IMR-90 (cell line): ENCODE measurements at regions of chr9 and their contacts with region 1.

Region 1: DNA sequence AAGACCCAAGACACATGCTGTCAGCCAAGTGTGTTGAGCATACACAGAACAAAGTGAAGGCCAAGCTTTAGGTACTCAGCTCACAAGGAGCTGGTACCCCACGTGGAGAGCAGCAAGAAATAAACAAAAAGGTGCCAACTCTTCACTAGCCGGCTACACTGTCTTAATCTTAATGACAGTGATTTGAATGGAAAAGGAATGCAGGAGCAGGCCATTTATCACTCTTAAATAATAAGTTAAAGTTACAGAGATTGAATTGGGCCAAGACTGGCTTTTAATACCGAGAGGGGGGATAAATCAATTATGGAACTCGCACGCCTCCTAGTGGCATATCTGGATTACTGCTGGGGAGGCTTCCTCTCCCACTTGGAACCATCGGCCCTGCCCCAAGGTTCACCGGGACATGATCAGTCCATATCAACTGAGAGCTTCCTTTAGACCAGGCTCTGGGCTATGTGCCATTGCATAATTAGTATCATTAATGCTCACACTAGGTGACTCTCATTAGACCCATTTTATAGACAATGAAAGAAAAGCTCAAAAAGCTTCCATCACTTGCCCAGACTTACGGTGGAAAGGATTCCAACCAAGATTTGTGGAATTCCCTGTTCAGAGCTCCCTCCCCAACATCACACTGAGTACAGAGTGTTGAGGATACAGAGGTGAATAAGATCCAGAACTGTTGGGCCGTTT is 94.0 kb downstream of the ACTL7B start:
- DNase-seq: peak; percentile 51
- ATAC-seq: peak; percentile 98
- H3K4me3 ChIP-seq: no peak overlapping the region
- H3K27ac ChIP-seq: no peak overlapping the region
- H3K4me1 ChIP-seq: no peaks in the 10 kb centered on the region
- H3K27me3 ChIP-seq: peaks cover 11% of the 10 kb centered on the region; the same call in 1 of the 2 replicates
- CTCF ChIP-seq: peak; percentile 89
- POLR2A ChIP-seq: no peak
- RAD21 ChIP-seq: peak; percentile 86

Region 2: DNA sequence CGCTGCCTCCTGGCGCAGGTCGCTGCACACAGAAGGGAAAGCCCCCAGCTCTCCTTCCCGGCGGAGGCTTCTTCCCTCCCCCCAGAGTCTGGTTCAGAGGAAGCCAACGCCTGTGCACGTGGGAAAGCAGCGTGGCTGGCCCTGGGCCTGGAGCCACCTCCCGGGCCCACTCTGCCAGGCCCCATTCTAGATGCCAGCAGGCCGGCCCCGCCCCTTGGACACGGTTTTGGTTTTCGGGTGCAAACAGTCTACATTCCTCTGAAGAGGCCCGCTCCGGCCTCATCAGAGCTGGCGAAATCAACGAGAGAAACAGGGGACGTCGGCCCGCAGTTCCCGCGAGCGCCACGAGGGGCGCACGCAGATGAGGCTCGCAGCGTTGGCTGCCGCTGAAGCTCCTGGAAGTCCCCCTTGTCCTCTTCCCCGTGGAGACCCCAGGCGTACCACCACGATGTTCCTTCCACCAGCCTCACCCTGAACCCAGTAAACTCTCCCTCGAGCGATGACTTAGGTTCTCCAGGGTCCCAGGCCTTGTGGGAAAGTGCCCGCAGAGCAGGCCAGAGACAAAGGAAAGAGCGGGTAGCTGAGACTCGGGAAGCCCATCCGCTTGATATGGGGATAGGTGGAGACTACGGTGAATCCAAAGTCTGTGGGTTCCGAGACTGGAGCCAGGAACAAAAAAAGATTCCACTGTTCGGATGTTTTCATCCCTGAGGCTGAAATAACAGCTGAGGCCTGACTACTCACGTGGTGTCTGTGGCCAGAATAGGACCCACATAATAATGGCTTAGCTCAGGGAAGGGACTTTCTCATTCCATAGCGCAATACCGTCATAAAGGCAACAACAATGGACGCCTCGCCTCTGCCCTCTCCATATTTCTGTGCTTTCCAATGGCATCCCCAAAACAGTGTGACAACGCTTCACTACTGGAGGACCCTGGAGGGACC is 1336.4 kb before region 1 on chr9:
- CTCF ChIA-PET with region 1: interaction called, 4 read pairs
- POLR2A ChIA-PET with region 1: no interaction called
- dilution Hi-C with region 1: no loop called
- in situ Hi-C with region 1: no loop called
- intact Hi-C with region 1: loop called (anchors 1 kb)
- DNase-seq: peak; percentile 19
- ATAC-seq: peak; percentile 87
- H3K4me3 ChIP-seq: no peak overlapping the region
- H3K27ac ChIP-seq: no peak overlapping the region
- H3K4me1 ChIP-seq: no peaks in the 10 kb centered on the region
- H3K27me3 ChIP-seq: peaks cover 1% of the 10 kb centered on the region; the same call in 1 of the 2 replicates
- CTCF ChIP-seq: peak; percentile 60
- POLR2A ChIP-seq: no peak
- RAD21 ChIP-seq: peak; percentile 40

Region 3: GRCh38 chr9:107478805-107479204 is 1283.0 kb before region 1 on chr9:
- CTCF ChIA-PET with region 1: no interaction called
- POLR2A ChIA-PET with region 1: no interaction called
- dilution Hi-C with region 1: no loop called
- in situ Hi-C with region 1: no loop called
- intact Hi-C with region 1: loop called (anchors 1 kb)
- DNase-seq: no peak
- ATAC-seq: no peak
- H3K4me3 ChIP-seq: no peak overlapping the region
- H3K27ac ChIP-seq: no peak overlapping the region
- H3K4me1 ChIP-seq: peaks cover 2% of the 10 kb centered on the region
- H3K27me3 ChIP-seq: no peaks in the 10 kb centered on the region
- CTCF ChIP-seq: no peak
- POLR2A ChIP-seq: no peak
- RAD21 ChIP-seq: no peak

Region 4: GRCh38 chr9:107732781-107733522 is 1028.8 kb before region 1 on chr9:
- CTCF ChIA-PET with region 1: no interaction called
- POLR2A ChIA-PET with region 1: no interaction called
- dilution Hi-C with region 1: no loop called
- in situ Hi-C with region 1: no loop called
- intact Hi-C with region 1: loop called (anchors 10 kb)
- DNase-seq: peak; percentile 73
- ATAC-seq: peak; percentile 38
- H3K4me3 ChIP-seq: peak overlapping the region; percentile 23; the same call in 1 of the 2 replicates
- H3K27ac ChIP-seq: peak overlapping the region; percentile 98
- H3K4me1 ChIP-seq: peaks cover 24% of the 10 kb centered on the region
- H3K27me3 ChIP-seq: no peaks in the 10 kb centered on the region
- CTCF ChIP-seq: no peak
- POLR2A ChIP-seq: no peak
- RAD21 ChIP-seq: no peak

Region 5: GRCh38 chr9:108282872-108283271 is 478.9 kb before region 1 on chr9:
- CTCF ChIA-PET with region 1: no interaction called
- POLR2A ChIA-PET with region 1: no interaction called
- dilution Hi-C with region 1: no loop called
- in situ Hi-C with region 1: no loop called
- intact Hi-C with region 1: loop called (anchors 5 kb)
- DNase-seq: peak; percentile 8
- ATAC-seq: no peak
- H3K4me3 ChIP-seq: no peak overlapping the region
- H3K27ac ChIP-seq: no peak overlapping the region
- H3K4me1 ChIP-seq: no peaks in the 10 kb centered on the region
- H3K27me3 ChIP-seq: no peaks in the 10 kb centered on the region
- CTCF ChIP-seq: peak; percentile 30; the same call in 1 of the 2 replicates
- POLR2A ChIP-seq: no peak
- RAD21 ChIP-seq: peak; percentile 26